Activated T-helper 1 cell treated with anti-CD3 and anti-CD28 coated beads, Interleukin-12 subunit alpha, Interleukin-12 subunit beta, Interleukin-2, Interleukin-4 antibody, amounts not matched to agents 30 ng/mL and 10 ng/mL and 1 ng/mL, durations not matched to agents 14 hours and 24 hours and 36 hours (primary cell): ENCODE measurements at regions of chr14 and their contacts with region 1.

Region 1: DNA sequence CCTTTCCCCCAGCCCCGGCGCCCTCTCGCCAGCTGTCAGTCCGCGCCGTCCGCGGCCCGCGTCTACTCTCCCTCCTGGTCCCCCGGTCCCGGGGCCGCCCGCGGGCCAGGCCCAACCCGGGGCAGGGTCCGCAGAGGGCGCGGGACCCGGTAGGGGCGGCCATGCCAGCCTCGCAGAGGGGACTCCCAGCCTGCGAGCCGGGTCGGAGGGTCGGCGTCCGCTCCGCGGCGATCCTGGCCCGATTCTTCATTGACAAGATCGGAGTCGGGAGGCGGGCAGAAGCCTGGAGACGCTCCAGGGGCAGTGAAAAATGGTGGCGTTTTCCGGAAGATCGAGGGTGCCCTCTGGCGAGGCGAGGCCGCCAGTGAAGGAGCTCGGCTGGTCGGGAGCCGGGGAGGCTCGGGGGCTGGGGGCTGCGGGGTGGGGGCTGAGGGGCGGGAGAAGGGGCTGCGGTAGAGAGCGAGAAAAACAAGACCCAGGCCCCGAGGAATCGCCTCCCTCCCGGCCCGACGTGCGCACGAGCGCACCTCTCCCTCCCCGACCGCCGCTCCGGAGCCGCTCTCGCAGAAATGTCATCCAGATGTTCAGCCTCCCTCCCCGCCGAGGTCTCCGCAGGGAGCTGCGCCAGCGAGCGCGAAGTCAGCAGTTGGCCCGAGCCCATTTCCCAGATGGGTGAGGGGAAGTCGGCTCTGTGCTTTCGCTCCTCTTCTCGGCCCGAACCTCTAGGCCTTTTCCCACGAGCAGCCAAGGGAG is 647 bp upstream of the TGFB3 start:
- DNase-seq: peak; percentile 75
- H3K4me3 Mint-ChIP-seq: peak overlapping the region; percentile 84
- H3K27ac Mint-ChIP-seq: peak overlapping the region; percentile 85
- H3K4me1 Mint-ChIP-seq: peaks cover 52% of the 10 kb centered on the region
- H3K27me3 Mint-ChIP-seq: peaks cover 5% of the 10 kb centered on the region

Region 2: GRCh38 chr14:75002392-75003249 is 979.8 kb before region 1 on chr14 and contains the start of gene EIF2B2:
- intact Hi-C with region 1: loop called (anchors 5 kb)
- DNase-seq: peak; percentile 99
- H3K4me3 Mint-ChIP-seq: peak within 1 kb of the TSS; percentile 98
- H3K27ac Mint-ChIP-seq: peak within 1 kb of the TSS; percentile 92
- H3K4me1 Mint-ChIP-seq: peaks cover 54% of the 10 kb centered on the region
- H3K27me3 Mint-ChIP-seq: peaks cover 10% of the 10 kb centered on the region
- total RNA-seq, gene EIF2B2: 52.8 and 54.3 TPM in 2 replicates

Region 3: GRCh38 chr14:75560962-75561432 is 421.4 kb before region 1 on chr14:
- intact Hi-C with region 1: no loop called
- DNase-seq: no peak
- H3K4me3 Mint-ChIP-seq: peak overlapping the region; percentile 15
- H3K27ac Mint-ChIP-seq: peak overlapping the region; percentile 93
- H3K4me1 Mint-ChIP-seq: peaks cover 68% of the 10 kb centered on the region
- H3K27me3 Mint-ChIP-seq: no peaks in the 10 kb centered on the region

Region 4: DNA sequence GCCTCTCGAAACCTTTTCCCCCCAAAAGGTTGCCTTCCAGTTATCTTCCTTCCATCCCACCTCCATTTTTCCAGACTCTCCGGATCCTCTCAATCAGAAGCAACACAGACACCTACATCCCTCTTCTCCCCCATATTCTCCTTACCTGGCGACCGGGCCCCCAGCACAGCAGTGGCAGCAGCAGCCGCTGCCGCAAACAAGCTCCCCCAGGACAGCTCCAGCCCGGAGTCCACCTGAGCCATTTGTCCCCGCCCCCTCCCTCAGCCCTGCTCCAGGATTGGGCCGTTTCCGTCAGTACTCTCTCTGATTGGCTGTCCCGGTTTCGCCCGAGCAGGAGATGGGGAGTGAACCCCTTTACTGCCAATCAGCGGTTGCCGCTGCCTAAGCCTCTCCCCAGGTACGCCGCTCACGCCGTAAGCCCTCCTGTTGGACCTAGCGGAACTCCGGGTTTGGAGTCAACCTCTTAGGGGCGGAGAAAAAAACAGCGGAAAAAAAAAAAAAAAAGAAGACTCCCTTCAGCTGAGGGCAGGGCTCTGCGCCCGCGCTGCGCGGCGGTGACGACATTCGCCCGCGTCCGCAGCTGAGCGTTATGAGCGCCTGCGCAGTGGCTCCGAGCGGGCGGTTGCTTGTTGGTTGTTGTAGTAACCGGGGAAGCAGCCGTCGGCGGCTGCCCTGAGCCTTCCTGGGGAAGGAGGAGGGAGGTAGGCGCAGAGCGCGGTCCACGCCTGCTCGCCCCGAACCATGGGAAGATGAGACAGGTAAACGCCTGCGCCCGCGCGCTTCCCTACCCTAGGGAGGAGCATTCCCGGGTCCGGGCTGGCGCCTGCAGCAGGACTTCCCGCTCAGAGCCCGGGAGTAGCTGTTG is 321.6 kb before region 1 on chr14 and contains the starts of genes ERG28 and TTLL5:
- intact Hi-C with region 1: loop called (anchors 2 kb)
- DNase-seq: peak; percentile 97
- H3K4me3 Mint-ChIP-seq: peak within 1 kb of the TSS; percentile 100
- H3K27ac Mint-ChIP-seq: peak within 1 kb of the TSS; percentile 94
- H3K4me1 Mint-ChIP-seq: peaks cover 38% of the 10 kb centered on the region
- H3K27me3 Mint-ChIP-seq: no peaks in the 10 kb centered on the region
- total RNA-seq, gene ERG28: 17.5 and 17.8 TPM in 2 replicates
- total RNA-seq, gene TTLL5: 36.2 and 39.0 TPM in 2 replicates

Region 5: DNA sequence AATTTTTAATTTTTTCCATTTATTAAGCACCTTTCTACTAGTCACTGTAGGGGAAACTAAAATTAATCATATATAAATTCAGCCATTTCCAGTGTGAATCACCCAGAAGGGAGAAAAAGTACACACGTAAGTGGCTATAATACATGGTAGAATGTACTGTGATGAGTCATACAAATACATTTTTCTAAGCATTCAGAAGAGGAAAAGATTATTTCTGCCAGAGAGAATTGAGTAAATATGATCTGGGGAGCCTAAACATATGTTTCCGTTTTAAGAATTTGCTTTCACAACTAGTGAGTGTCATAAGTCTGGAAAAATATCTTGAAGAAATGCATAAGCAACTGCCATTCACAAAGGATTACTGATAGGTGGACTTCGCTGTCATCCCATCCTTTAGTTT is 103.4 kb before region 1 on chr14:
- intact Hi-C with region 1: loop called (anchors 1 kb)
- DNase-seq: no peak
- H3K4me3 Mint-ChIP-seq: no peak overlapping the region
- H3K27ac Mint-ChIP-seq: peak overlapping the region; percentile 7
- H3K4me1 Mint-ChIP-seq: peaks cover 38% of the 10 kb centered on the region
- H3K27me3 Mint-ChIP-seq: no peaks in the 10 kb centered on the region

Region 6: DNA sequence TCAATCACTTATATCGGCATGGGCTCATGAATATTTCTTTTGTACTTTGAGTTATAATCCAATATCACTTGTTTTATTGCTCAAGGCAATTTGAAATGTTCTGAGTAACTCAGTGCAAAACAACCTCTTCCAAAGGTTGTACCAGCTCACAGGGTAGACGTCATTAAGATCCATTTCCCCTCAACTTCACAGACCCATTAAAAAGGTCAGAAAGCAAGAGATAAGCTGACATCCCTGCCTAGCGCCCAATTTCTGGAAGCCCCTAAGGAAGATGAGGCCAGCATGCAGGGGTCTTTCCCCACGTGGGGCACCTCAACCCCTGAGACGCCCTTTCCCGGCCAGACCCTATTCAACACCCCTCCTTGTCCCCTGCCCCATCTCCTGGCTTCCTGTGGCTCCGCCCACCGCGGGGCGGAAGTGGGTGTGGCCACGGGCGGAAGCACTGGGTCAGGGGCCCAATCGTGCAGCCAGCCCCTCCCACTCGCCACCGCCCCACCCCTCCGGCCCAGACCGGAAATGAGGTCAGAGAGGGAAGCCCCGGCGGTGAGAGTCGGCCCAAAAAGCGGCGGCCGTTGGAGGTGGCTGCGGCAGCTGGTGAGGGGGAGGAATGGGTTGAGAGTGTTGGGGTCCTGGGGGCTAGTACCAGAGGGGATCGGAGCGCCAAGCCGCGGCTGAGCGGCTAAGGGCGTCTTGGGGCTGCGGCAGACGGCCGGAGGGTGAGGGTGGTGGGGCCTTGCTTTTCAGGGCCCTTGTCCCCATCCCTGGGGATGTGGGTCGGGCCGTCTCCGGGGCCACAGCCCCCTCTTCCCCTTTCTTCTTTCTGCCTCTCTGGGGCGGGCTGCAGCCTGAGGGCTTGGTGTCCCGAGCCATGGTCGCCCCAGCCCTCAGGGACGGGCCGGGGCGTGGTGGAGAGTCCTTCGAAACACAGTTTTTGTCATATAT is 169.2 kb after region 1 on chr14 and contains the start of gene GPATCH2L:
- intact Hi-C with region 1: loop called (anchors 1 kb)
- DNase-seq: peak; percentile 95
- H3K4me3 Mint-ChIP-seq: peak within 1 kb of the TSS; percentile 94
- H3K27ac Mint-ChIP-seq: peak within 1 kb of the TSS; percentile 94
- H3K4me1 Mint-ChIP-seq: peaks cover 54% of the 10 kb centered on the region
- H3K27me3 Mint-ChIP-seq: peaks cover 11% of the 10 kb centered on the region
- total RNA-seq, gene GPATCH2L: 56.1 and 60.9 TPM in 2 replicates